H1 (cell line): ENCODE measurements at regions of chr18 and their contacts with region 1.

Region 1: GRCh38 chr18:35851286-35851970 is 121.1 kb upstream of the RMP24 start:
- DNase-seq: peak; percentile 53 to 81
- H3K4me3 ChIP-seq: peak overlapping the region in 1 of 4 experiments; percentile 17; a peak in 1 of 8 replicates
- H3K27ac ChIP-seq: peak overlapping the region; percentile 70
- H3K4me1 ChIP-seq: peaks cover 6 to 25% (median 22%) of the 10 kb centered on the region in 4 experiments; a peak in 5 of 7 replicates
- H3K27me3 ChIP-seq: no peaks in the 10 kb centered on the region
- CTCF ChIP-seq: no peak
- EP300 ChIP-seq: peak in 1 of 2 experiments; percentile 79; a peak in 1 of 3 replicates
- POLR2A ChIP-seq: no peak
- RAD21 ChIP-seq: no peak

Region 2: DNA sequence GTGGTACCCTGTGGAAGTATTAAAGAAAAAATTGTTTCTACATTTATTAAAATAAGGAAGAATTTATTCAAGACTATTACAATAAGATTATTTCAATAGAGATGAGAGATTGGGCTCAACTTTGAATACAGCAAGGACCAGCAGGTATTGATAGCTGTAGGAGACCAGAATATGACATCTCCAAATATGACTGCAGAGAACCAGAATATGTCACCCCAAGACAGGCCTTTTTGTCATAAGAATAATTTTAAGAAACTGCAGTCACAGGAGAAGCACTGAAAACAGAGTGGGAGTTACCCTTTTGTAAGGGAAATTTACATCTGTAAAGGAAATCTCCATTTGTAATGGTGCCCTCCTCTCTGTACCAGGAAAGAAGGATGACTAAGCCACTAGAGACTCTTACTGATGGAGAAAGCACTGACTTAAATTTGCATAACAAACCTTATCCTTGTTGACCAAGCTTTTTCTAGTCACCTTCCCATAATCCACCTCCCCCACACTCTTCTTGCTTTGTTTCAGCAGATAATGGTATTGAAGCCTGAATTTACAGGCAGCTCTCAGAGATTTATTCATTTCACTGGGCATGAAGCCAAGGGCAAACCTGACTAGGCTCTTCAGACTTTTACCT is 24.0 kb before region 1 on chr18:
- CTCF ChIA-PET with region 1: interaction called, 4 read pairs
- POLR2A ChIA-PET with region 1: interaction called, 54 read pairs
- DNase-seq: peak in 1 of 2 experiments; percentile 60
- H3K4me3 ChIP-seq: peak overlapping the region in 1 of 4 experiments; percentile 15; a peak in 1 of 8 replicates
- H3K27ac ChIP-seq: peak overlapping the region; percentile 86
- H3K4me1 ChIP-seq: peaks cover 10 to 28% (median 20%) of the 10 kb centered on the region in 4 experiments
- H3K27me3 ChIP-seq: no peaks in the 10 kb centered on the region
- CTCF ChIP-seq: no peak
- EP300 ChIP-seq: peak in 1 of 2 experiments; percentile 95; a peak in 2 of 3 replicates
- POLR2A ChIP-seq: peak in 1 of 2 experiments; percentile 24; a peak in 1 of 3 replicates
- RAD21 ChIP-seq: peak in 1 of 2 experiments; percentile 16; a peak in 1 of 4 replicates

Region 3: GRCh38 chr18:35861367-35862118 is 10.1 kb after region 1 on chr18:
- CTCF ChIA-PET with region 1: interaction called, 11 read pairs
- POLR2A ChIA-PET with region 1: interaction called, 9 read pairs
- DNase-seq: peak in 1 of 2 experiments; percentile 36
- H3K4me3 ChIP-seq: no peak overlapping the region
- H3K27ac ChIP-seq: no peak overlapping the region
- H3K4me1 ChIP-seq: peaks cover 0 to 14% (median 5%) of the 10 kb centered on the region in 4 experiments; a peak in 5 of 7 replicates
- H3K27me3 ChIP-seq: no peaks in the 10 kb centered on the region
- CTCF ChIP-seq: no peak
- EP300 ChIP-seq: no peak
- POLR2A ChIP-seq: no peak
- RAD21 ChIP-seq: no peak